Mammary epithelial cell (primary cell): ENCODE measurements at regions of chr19 and their contacts with region 1.

Region 1: GRCh38 chr19:44141191-44142058 is at the start of gene ZNF234:
- DNase-seq: peak; percentile 71
- H3K4me3 ChIP-seq: peak within 1 kb of the TSS; percentile 66 to 80 (median 68)
- H3K27ac ChIP-seq: peak within 1 kb of the TSS; percentile 28
- H3K4me1 ChIP-seq: peaks cover 7% of the 10 kb centered on the region
- H3K27me3 ChIP-seq: no peaks in the 10 kb centered on the region
- CTCF ChIP-seq: no peak
- total RNA-seq, gene ZNF234: 8.9 to 10.5 TPM

Region 2: DNA sequence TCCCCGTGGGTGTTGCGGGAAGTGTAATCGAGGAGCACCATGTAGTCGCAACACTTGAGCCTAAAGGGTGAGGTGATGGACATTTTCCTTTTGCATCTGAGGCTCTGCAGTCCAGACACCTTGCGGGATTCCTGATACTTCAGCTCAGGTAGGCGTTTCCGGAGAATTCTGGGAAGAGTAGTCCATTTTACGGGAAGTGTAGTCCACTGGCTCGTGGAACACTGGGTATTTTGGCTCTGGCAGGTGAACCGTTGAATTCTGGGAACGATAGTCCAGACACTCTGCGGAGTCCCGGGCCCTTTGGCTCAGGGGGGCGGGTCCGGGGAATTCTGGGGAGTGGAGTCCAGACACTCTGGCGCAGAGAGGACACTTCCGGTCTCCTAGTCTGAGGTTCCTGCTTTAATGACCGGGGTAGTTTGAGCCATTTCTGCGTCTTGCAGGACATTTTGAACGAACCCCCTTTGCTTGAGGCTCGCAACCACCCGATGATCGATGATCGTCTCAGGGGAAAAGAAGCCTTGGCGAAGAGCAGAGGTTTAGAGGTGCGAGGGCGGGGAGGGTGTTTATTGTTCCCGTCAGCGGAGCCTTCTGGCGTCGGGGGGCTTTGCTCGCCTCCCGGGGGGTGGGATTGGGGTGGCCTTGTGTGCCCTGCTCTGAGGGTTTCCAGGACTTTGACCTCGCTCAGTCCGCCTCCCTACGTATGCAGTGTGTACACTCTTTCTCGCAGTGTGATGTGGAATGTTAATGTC is 89.6 kb before region 1 on chr19 and contains the start of gene ZNF223:
- CTCF ChIA-PET with region 1: no interaction called
- dilution Hi-C with region 1: no loop called
- in situ Hi-C with region 1: no loop called
- intact Hi-C with region 1: no loop called
- DNase-seq: peak; percentile 97
- H3K4me3 ChIP-seq: peak within 1 kb of the TSS; percentile 54 to 63 (median 56)
- H3K27ac ChIP-seq: peak within 1 kb of the TSS; percentile 41
- H3K4me1 ChIP-seq: peaks cover 9% of the 10 kb centered on the region
- H3K27me3 ChIP-seq: no peaks in the 10 kb centered on the region
- CTCF ChIP-seq: no peak
- total RNA-seq, gene ZNF223: 4.6 to 6.3 TPM

Region 3: DNA sequence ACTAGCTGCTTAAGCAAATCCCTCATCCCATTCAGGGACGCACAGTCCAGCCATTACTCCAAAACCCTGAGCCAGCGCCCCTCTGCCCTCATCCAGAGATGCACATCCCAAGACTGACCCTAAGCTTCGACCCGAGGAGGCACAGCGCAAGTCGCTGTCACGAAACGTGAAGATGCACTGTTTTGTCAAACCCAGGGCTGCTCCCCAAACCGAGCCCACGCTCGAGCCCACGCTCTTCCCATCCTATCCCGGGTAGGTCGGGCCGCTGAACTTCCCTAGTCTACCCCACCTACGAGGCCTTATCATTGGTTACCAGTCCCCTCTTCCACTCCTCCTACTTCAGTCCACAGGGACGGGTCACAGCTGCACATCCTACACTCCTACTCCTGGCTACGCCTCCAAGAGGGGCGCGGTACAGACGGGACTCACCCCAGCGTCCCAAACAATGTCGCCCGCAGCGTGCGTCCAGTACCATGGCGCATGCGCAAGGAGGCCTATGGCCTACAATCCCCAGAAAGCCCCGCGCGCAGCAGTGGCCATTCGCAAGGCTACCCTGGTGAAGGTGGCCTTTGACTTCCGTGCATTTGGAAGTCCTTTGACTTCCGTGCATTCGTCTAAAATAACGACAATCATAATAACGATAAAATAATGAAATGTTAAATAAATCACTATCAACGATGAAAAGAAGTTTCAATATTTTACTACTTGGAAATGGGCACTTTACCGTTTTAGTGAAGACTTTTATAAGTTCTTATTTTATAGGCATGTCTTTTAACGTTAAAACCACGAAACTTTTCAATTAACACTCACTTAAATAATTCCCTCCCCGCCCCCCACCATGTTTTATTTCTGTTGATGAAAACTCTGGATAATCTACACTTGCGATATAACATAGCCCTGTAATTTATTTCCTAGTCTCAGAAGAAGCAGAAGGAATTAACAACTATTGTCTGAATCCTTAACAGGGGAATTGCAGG is 260.0 kb after region 1 on chr19 and contains the start of gene ZNF285:
- CTCF ChIA-PET with region 1: no interaction called
- dilution Hi-C with region 1: no loop called
- in situ Hi-C with region 1: no loop called
- intact Hi-C with region 1: loop called (anchors 1 kb)
- DNase-seq: peak; percentile 95
- H3K4me3 ChIP-seq: peak within 1 kb of the TSS; percentile 61 to 82 (median 69)
- H3K27ac ChIP-seq: no peak within 1 kb of the TSS
- H3K4me1 ChIP-seq: no peaks in the 10 kb centered on the region
- H3K27me3 ChIP-seq: no peaks in the 10 kb centered on the region
- CTCF ChIP-seq: no peak
- total RNA-seq, gene ZNF285: 2.7 to 2.8 TPM